Activated T-helper 2 cell treated with anti-CD3 and anti-CD28 coated beads, Interferon-gamma antibody, Interleukin-2, Interleukin-4, amounts not matched to agents 10 μg/mL and 5 μg/mL and 100 μg/mL, durations not matched to agents 14 hours and 24 hours and 36 hours (primary cell): ENCODE measurements at regions of chr2 and their contacts with region 1.

Region 1: DNA sequence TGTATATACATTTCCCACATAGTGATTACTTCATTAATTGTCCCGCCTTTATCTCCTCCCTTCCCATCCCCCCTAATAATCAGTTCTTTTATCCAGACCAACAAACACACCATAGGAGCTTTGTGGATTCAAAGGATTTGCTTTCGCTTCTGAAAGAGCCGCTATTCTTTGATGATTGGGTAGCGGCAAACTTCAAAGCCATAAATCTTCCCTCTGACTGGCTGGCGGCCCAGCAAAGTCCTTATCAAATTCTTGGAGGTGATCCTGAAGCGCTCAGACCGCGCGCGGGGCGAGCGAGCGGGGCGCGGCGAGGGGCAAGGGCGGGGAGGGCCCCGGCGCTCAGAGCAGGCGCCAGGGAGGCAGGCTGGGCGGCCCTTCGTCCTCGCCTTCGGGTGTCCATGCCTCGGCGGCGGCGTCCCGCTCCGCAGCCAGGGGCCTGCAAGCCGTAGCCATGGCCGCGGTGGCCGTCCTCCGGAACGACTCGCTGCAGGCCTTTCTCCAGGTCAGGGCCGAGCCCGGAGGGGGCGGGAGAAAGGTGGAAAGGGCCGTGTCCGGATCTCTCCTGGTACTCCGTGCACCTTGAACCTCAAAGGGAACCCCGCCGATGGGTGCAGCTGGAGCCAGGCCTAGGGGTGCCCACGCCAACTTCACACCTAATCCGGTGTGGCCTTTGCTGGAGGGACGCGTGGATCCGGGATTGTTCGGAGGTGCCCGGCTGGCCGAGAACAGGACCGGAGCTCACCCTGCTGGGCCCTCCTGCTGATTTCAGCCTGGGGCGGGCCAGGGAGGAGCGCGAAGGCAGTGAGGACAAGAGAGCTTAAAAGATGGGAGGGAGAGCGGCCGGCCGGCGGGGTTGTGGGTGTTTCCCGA is at the start of gene SP5:
- DNase-seq: peak; percentile 40
- H3K4me3 Mint-ChIP-seq: peak within 1 kb of the TSS; percentile 76
- H3K27ac Mint-ChIP-seq: no peak within 1 kb of the TSS
- H3K4me1 Mint-ChIP-seq: peaks cover 26% of the 10 kb centered on the region
- H3K27me3 Mint-ChIP-seq: peaks cover 68% of the 10 kb centered on the region
- total RNA-seq, gene SP5: 0.30 and 0.32 TPM in 2 replicates

Region 2: GRCh38 chr2:169994752-169995151 is 720.5 kb before region 1 on chr2:
- intact Hi-C with region 1: no loop called
- DNase-seq: no peak
- H3K4me3 Mint-ChIP-seq: no peak overlapping the region
- H3K27ac Mint-ChIP-seq: no peak overlapping the region
- H3K4me1 Mint-ChIP-seq: no peaks in the 10 kb centered on the region
- H3K27me3 Mint-ChIP-seq: no peaks in the 10 kb centered on the region

Region 3: GRCh38 chr2:170235860-170236679 is 479.2 kb before region 1 on chr2:
- intact Hi-C with region 1: loop called (anchors 5 kb)
- DNase-seq: peak; percentile 11
- H3K4me3 Mint-ChIP-seq: no peak overlapping the region
- H3K27ac Mint-ChIP-seq: no peak overlapping the region
- H3K4me1 Mint-ChIP-seq: no peaks in the 10 kb centered on the region
- H3K27me3 Mint-ChIP-seq: peaks cover 36% of the 10 kb centered on the region

Region 4: DNA sequence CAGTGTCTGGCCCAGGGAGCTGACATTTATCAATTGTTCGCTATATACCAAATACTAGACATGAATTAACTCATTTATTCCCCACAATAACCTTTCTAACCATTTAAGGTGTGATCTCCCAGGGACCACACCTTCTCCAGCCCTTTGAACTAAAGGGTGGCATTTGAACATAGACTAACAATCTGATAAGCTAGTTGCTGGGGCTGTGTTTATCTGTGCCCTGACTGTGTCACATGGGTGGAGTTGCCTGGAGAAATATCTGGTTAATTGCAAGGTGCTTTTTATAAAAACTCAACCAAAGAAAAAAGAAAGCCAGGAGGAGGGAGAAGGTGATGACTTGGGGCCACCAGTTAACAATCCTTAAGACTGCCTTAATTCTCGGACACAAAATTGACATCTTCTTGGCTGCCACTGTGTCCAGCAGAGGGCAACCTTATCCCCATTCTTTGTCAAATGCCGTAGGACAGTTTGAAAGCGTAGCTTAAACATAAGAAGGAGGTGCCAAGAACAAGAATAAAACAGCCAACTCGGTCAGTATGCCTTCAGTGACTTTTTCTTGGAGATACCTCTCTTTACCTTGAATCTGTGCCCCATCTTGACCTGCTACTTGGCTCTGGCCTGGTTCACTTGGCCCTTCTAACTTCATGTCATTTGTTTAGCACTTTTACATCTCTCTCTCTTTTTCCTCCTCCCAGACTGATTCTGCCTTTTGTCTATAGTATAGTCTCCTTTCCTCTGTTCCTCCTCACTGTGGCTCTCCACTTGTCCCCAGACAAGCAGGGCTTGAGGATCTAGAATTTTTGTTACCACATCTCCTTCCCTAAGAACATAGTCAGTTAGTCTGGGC is 354.0 kb before region 1 on chr2:
- intact Hi-C with region 1: loop called (anchors 5 kb)
- DNase-seq: peak; percentile 61
- H3K4me3 Mint-ChIP-seq: peak overlapping the region; percentile 77
- H3K27ac Mint-ChIP-seq: peak overlapping the region; percentile 100
- H3K4me1 Mint-ChIP-seq: peaks cover 60% of the 10 kb centered on the region
- H3K27me3 Mint-ChIP-seq: no peaks in the 10 kb centered on the region

Region 5: GRCh38 chr2:170505631-170506275 is 209.5 kb before region 1 on chr2:
- intact Hi-C with region 1: loop called (anchors 10 kb)
- DNase-seq: no peak
- H3K4me3 Mint-ChIP-seq: no peak overlapping the region
- H3K27ac Mint-ChIP-seq: peak overlapping the region; percentile 73
- H3K4me1 Mint-ChIP-seq: peaks cover 54% of the 10 kb centered on the region
- H3K27me3 Mint-ChIP-seq: no peaks in the 10 kb centered on the region

Region 6: DNA sequence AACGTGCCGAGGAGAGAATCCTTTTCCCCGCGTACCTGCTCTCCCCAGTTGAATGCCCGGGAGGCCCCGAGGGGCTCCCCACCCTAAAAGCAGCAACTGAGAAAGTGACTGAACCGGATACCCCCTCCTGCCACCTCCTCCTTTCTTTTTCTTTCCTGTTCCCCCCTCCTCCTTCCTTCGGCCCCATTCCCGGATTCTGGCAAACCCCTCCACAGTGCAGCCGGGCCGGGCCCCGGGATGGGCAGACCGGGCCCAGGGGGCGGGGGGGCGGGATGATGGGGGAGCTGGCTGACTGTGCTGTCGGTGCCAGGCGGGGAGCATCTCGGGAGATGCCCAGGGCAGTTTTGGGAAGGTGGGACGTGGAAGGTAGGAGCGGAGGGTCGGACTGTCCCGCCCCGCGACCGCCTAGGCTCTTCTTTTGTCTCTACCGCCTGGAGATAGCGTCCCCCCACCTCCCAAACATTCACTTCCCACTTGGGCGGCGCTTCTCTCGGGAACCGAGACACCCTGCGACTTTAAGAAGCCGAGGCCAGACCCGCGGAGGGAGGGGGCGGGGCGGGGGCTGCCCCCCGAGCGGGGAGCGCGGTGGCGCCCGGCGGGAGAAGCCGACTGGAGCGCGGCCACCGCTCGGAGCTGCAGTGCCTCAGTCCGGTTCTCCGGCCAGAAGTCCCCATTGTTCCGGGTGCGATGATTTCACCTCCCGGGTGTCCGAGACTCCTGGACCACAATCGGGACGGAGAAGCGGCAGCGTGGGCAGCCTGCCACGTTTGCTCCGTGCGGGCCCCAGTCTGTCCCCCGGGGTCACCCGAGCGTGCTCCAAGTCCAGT is 1379.2 kb after region 1 on chr2:
- intact Hi-C with region 1: loop called (anchors 5 kb)
- DNase-seq: no peak
- H3K4me3 Mint-ChIP-seq: peak overlapping the region; percentile 8
- H3K27ac Mint-ChIP-seq: no peak overlapping the region
- H3K4me1 Mint-ChIP-seq: peaks cover 22% of the 10 kb centered on the region
- H3K27me3 Mint-ChIP-seq: peaks cover 78% of the 10 kb centered on the region